ENCODE measurements at regions of chr9 and their contacts with region 1.

Region 1: DNA sequence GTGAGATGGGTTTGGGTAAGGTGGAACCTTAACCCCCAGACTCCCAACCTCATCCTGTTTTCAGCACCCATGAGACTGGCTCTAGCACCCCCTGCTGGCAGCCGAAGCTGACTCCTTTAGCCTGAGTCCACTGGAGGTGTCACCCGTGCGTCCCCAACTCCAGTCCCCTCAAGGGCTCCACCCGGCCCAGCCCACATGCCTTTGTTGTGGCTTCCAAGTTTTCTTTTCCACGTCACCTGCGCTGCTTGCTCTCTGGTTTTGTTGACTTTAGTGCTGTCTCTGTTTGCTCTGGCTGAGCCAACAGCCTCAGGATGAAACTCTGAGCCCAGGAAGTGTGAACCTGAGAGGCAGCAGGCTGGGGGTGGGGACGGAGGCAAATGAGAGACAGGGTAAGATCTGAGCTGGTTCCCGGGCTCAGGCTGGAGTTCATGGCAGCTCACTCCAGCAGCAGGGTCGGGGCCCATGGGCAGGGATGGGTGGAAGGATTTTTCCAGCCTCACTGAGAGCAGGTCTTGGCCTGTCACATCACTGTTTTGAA is 13.2 kb upstream of the AQP7 start:
- DNase-seq: peak; percentile 82 to 98 (median 96)
- ATAC-seq: peak; percentile 97
- H3K4me3 ChIP-seq: peak overlapping the region; percentile 25
- H3K4me3 Mint-ChIP-seq: peak overlapping the region; percentile 74 to 89 (median 84)
- H3K27ac ChIP-seq: peak overlapping the region; percentile 75
- H3K27ac Mint-ChIP-seq: peak overlapping the region; percentile 93 to 99 (median 97)
- H3K4me1 ChIP-seq: peaks cover 34 to 44% of the 10 kb centered on the region in 2 donors
- H3K4me1 Mint-ChIP-seq: peaks cover 31 to 51% (median 45%) of the 10 kb centered on the region in 7 donors
- H3K27me3 ChIP-seq: no peaks in the 10 kb centered on the region
- H3K27me3 Mint-ChIP-seq: peaks cover 0 to 8% (median 0%) of the 10 kb centered on the region in 5 donors

Region 2: DNA sequence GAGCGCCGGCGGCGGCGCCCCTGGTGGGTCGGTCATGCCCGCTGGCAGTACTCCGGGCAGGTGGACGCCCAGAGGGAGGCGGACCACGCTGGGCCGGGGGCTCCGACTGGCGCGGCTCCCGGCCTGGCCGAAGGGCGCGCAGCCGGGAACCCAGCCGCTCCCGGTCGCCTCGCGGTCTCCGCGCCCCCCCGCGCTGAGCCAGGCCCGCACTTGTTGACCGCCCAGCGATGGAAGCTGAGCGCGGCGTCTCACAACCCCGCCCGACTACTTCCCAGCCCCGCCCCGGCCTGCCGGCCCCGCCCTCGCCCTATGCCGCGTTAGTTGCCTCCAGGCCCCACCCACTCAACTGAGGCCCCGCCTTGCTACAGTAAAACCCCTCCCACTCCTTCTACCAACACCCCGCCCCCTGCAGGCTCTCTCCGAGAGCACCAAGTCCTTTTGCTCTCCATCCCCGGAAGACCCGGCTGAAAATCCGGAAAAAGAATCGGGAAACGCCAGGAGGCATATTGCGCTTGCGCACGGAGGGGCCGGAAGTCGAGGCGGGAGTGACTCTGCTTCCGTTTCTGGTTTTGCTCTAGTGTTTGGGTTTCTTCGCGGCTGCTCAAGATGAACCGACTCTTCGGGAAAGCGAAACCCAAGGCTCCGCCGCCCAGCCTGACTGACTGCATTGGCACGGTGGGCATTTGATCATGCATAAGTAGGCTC is 150.9 kb before region 1 on chr9 and contains the starts of genes BAG1 and CHMP5:
- CTCF ChIA-PET with region 1: no interaction called
- POLR2A ChIA-PET with region 1: no interaction called
- intact Hi-C with region 1: loop called in 1 of 2 experiments (anchors 1 kb)
- DNase-seq: peak; percentile 98 to 100 (median 100)
- ATAC-seq: peak; percentile 99
- H3K4me3 ChIP-seq: peak within 1 kb of the TSS; percentile 95
- H3K4me3 Mint-ChIP-seq: peak within 1 kb of the TSS; percentile 82 to 98 (median 92)
- H3K27ac ChIP-seq: peak within 1 kb of the TSS; percentile 88
- H3K27ac Mint-ChIP-seq: peak within 1 kb of the TSS; percentile 84 to 99 (median 97)
- H3K4me1 ChIP-seq: peaks cover 15 to 34% of the 10 kb centered on the region in 2 donors
- H3K4me1 Mint-ChIP-seq: peaks cover 36 to 66% (median 55%) of the 10 kb centered on the region in 7 donors
- H3K27me3 ChIP-seq: no peaks in the 10 kb centered on the region
- H3K27me3 Mint-ChIP-seq: peaks cover 0 to 2% (median 0%) of the 10 kb centered on the region in 5 donors
- total RNA-seq, gene BAG1: 48.6 to 77.2 (median 61.0) TPM
- total RNA-seq, gene CHMP5: 21.4 to 74.6 (median 35.3) TPM

Region 3: GRCh38 chr9:33429256-33430080 is 13.9 kb after region 1 on chr9:
- CTCF ChIA-PET with region 1: interaction called, 8 read pairs
- POLR2A ChIA-PET with region 1: interaction called, 7 read pairs
- intact Hi-C with region 1: loop called in 1 of 2 experiments (anchors 2 kb)
- DNase-seq: no peak
- ATAC-seq: no peak
- H3K4me3 ChIP-seq: no peak overlapping the region
- H3K4me3 Mint-ChIP-seq: no peak overlapping the region
- H3K27ac ChIP-seq: no peak overlapping the region
- H3K27ac Mint-ChIP-seq: peak overlapping the region in 5 of 9 donors; percentile 3 to 82 (median 27)
- H3K4me1 ChIP-seq: no peaks in the 10 kb centered on the region
- H3K4me1 Mint-ChIP-seq: peaks cover 0 to 15% (median 0%) of the 10 kb centered on the region in 7 donors
- H3K27me3 ChIP-seq: no peaks in the 10 kb centered on the region
- H3K27me3 Mint-ChIP-seq: no peaks in the 10 kb centered on the region

Region 4: GRCh38 chr9:33452828-33453271 is 37.3 kb after region 1 on chr9:
- CTCF ChIA-PET with region 1: interaction called, 134 read pairs
- POLR2A ChIA-PET with region 1: interaction called, 102 read pairs
- intact Hi-C with region 1: no loop called
- DNase-seq: peak in 4 of 9 donors; percentile 25 to 51 (median 40)
- ATAC-seq: peak; percentile 63
- H3K4me3 ChIP-seq: no peak overlapping the region
- H3K4me3 Mint-ChIP-seq: peak overlapping the region in 5 of 10 donors; percentile 25 to 67 (median 36)
- H3K27ac ChIP-seq: peak overlapping the region; percentile 37
- H3K27ac Mint-ChIP-seq: peak overlapping the region in 8 of 9 donors; percentile 59 to 95 (median 82)
- H3K4me1 ChIP-seq: peaks cover 39 to 56% of the 10 kb centered on the region in 2 donors
- H3K4me1 Mint-ChIP-seq: peaks cover 40 to 64% (median 56%) of the 10 kb centered on the region in 7 donors
- H3K27me3 ChIP-seq: no peaks in the 10 kb centered on the region
- H3K27me3 Mint-ChIP-seq: no peaks in the 10 kb centered on the region

Region 5: DNA sequence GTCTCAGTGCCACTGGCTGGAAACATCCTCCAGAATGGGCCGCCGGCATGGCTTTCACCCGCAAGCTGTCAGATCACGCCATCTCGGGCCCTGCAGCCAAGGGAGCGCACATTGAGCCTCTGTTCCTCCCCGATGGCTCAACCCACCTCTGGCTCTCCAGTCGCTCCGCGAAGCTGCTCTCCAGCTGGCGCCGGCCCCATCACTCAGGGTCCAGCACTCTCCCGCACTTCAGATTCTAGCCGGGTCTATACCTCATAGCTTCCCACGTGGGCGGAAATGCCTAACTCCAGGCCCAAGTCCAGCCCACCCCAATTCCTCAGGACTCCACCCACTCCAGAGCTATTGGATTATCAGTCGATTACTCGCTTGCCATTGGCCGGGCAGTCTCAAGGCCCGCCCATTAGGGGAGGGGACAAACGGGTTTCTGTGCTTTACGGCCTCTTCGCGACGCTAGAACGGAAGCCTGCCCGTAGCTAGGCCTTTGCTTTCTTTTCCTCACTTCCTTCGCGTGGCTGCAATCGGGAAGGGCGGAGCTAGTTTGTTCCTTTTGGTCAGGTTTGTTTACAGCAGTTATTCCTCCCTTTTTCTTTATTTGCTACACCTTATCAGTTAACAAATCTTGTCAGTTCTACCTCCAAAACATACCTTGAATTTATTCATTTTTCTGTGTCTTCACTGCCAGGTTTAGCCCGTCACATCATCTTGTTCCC is 58.2 kb after region 1 on chr9 and contains the start of gene NOL6:
- CTCF ChIA-PET with region 1: interaction called, 9 read pairs
- POLR2A ChIA-PET with region 1: interaction called, 35 read pairs
- intact Hi-C with region 1: loop called (anchors 1 kb)
- DNase-seq: peak; percentile 91 to 99 (median 98)
- ATAC-seq: peak; percentile 100
- H3K4me3 ChIP-seq: peak within 1 kb of the TSS; percentile 88
- H3K4me3 Mint-ChIP-seq: peak within 1 kb of the TSS; percentile 88 to 100 (median 97)
- H3K27ac ChIP-seq: peak within 1 kb of the TSS; percentile 78
- H3K27ac Mint-ChIP-seq: peak within 1 kb of the TSS; percentile 88 to 99 (median 96)
- H3K4me1 ChIP-seq: peaks cover 13 to 19% of the 10 kb centered on the region in 2 donors
- H3K4me1 Mint-ChIP-seq: peaks cover 9 to 38% (median 31%) of the 10 kb centered on the region in 7 donors
- H3K27me3 ChIP-seq: no peaks in the 10 kb centered on the region
- H3K27me3 Mint-ChIP-seq: no peaks in the 10 kb centered on the region
- total RNA-seq, gene NOL6: 34.0 to 48.0 (median 44.0) TPM